ENCODE measurements at regions of chr9 and their contacts with region 1.

Region 1: GRCh38 chr9:1869843-1870242 is 145.3 kb upstream of the SMARCA2 start:
- DNase-seq: peak; percentile 22
- CTCF ChIP-seq: peak; percentile 49

Region 2: GRCh38 chr9:1460143-1460769 is 409.6 kb before region 1 on chr9:
- in situ Hi-C with region 1: loop called (anchors 25 kb)
- DNase-seq: peak; percentile 21
- CTCF ChIP-seq: peak; percentile 65

Region 3: GRCh38 chr9:1939926-1940368 is 70.1 kb after region 1 on chr9:
- in situ Hi-C with region 1: loop called (anchors 10 kb)
- DNase-seq: peak; percentile 81
- CTCF ChIP-seq: peak; percentile 83

Region 4: GRCh38 chr9:2053883-2054845 is 184.3 kb after region 1 on chr9:
- in situ Hi-C with region 1: loop called (anchors 10 kb)
- DNase-seq: peak; percentile 46
- CTCF ChIP-seq: no peak